Activated T-helper 1 cell treated with anti-CD3 and anti-CD28 coated beads, Interleukin-12 subunit alpha, Interleukin-12 subunit beta, Interleukin-2, Interleukin-4 antibody, amounts not matched to agents 30 ng/mL and 10 ng/mL and 1 ng/mL, durations not matched to agents 14 hours and 24 hours and 36 hours (primary cell): ENCODE measurements at regions of chr13 and their contacts with region 1.

Region 1: GRCh38 chr13:33542283-33543088 is 256.9 kb upstream of the STARD13 start:
- DNase-seq: peak; percentile 99
- H3K4me3 Mint-ChIP-seq: peak overlapping the region; percentile 90
- H3K27ac Mint-ChIP-seq: peak overlapping the region; percentile 100
- H3K4me1 Mint-ChIP-seq: peaks cover 53% of the 10 kb centered on the region
- H3K27me3 Mint-ChIP-seq: no peaks in the 10 kb centered on the region

Region 2: GRCh38 chr13:32315238-32316027 is 1227.1 kb before region 1 on chr13 and contains the starts of genes BRCA2 and ZAR1L:
- intact Hi-C with region 1: loop called (anchors 1 kb)
- DNase-seq: peak; percentile 86
- H3K4me3 Mint-ChIP-seq: peak within 1 kb of the TSS; percentile 96
- H3K27ac Mint-ChIP-seq: peak within 1 kb of the TSS; percentile 100
- H3K4me1 Mint-ChIP-seq: peaks cover 48% of the 10 kb centered on the region
- H3K27me3 Mint-ChIP-seq: no peaks in the 10 kb centered on the region
- total RNA-seq, gene BRCA2: 16.7 and 18.9 TPM in 2 replicates
- total RNA-seq, gene ZAR1L: not detected in 2 replicates

Region 3: DNA sequence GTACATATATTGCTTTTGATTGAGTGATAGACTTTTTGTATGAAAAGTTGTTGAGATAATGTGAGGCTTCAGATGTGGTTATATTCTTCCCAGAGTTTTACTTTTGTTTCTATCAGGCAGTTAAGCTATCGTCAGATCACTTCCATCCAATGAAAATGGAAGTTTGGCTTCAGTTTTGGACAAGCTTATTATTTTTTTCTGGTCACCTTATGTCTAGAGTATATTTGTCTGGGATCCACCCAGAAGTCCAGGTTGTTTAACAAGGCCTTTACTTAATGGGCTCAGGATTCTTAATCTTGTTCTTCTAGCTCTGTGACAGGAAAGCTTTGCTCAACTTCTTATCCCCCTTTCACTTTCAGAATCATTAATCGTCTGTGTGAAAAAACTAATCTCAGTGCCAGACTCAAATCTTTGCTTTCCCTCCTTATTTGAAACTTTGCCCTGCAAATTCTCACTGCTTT is 805.3 kb before region 1 on chr13:
- intact Hi-C with region 1: loop called (anchors 1 kb)
- DNase-seq: no peak
- H3K4me3 Mint-ChIP-seq: peak overlapping the region; percentile 74
- H3K27ac Mint-ChIP-seq: peak overlapping the region; percentile 80
- H3K4me1 Mint-ChIP-seq: peaks cover 38% of the 10 kb centered on the region
- H3K27me3 Mint-ChIP-seq: no peaks in the 10 kb centered on the region

Region 4: DNA sequence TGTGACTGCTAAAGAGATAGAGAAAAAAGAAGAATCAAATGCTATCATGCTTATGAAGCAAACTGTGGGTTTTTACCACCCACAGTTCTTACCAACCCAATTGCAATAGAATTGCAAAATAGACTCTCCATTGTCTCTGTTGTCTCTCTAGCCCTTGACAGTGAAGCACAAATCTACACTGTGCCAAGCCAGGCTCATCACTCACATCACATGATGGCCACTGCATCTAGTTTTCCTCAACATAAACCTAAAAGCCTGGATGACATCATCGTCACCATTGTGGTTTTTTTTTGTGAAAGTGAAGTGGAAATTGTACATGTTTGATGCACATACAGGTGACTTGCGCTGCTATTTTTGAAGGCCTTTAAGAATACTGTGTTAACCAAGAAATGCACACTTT is 470.2 kb before region 1 on chr13:
- intact Hi-C with region 1: loop called (anchors 5 kb)
- DNase-seq: peak; percentile 3
- H3K4me3 Mint-ChIP-seq: no peak overlapping the region
- H3K27ac Mint-ChIP-seq: peak overlapping the region; percentile 55
- H3K4me1 Mint-ChIP-seq: peaks cover 35% of the 10 kb centered on the region
- H3K27me3 Mint-ChIP-seq: no peaks in the 10 kb centered on the region

Region 5: DNA sequence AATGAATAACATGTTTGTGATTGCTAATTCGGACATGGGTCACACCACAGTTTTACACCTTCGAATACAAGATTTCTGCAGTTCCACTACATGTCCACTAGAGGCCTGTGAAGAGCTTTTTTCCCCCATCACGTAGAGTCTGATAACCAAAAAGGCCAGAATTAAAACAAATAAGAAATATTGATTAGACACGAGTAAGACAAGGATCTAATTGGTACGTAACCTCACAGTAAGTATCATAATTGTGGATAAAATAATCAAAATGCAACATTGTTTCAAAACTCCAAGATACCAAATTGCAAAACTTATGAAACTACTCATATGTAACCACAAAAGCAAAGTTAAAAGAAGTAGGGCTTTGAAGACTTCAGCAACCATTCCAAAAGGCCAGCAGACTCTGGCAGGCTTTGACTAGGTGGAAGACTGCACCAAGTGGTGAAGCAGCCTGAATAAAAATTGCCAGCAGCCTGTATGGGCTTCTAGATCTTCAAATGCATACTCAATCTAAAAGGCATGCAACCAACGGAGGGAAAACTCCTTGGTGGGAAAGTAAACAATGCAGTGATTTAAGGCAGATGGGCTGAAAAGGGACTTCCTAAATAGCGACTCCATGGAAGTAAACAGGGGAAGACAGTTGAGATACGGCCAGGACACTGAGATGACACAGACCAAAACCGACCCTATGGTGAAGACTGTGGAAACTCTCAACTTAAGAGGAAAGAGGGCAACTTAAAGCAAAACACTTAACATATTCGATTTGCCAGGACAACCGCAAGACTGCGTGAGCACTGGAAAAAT is 313.6 kb before region 1 on chr13:
- intact Hi-C with region 1: loop called (anchors 1 kb)
- DNase-seq: no peak
- H3K4me3 Mint-ChIP-seq: no peak overlapping the region
- H3K27ac Mint-ChIP-seq: no peak overlapping the region
- H3K4me1 Mint-ChIP-seq: peaks cover 11% of the 10 kb centered on the region
- H3K27me3 Mint-ChIP-seq: no peaks in the 10 kb centered on the region

Region 6: DNA sequence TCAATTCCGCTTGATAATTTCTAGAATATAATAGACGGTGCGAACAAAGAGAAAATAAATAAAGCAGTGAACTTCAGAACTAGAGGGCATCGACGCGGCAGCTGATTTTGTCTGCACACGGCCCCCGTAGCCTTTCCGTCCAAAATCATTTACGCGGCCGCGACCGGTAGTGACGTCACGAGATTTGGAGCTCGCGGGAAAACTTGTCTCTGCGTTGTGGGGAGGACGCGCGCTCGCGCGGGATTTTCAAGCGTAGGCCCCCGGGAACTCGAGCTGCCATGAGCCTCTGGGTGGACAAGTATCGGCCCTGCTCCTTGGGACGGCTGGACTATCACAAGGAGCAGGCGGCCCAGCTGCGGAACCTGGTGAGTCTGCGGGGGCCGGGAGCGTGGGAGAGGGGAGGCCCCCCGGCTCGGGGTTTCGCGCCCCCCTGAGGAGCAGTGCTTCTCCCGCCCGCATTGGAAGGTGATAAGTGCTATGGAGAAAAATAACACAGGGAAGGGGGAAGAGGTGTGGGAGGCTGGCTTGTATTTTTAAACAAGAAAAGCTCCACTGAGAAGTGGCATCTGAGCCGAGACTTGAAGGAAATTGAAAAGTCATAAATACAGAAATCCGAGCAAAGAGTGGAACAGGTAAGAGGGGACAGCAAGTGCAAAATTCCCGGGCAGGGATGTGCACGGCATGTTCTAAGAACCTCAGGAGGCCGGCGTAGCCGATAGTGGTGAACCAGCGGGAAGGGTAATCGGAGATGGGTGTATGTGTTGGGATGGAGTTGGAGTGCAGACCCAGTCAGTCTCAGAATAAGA is 275.6 kb after region 1 on chr13 and contains the start of gene RFC3:
- intact Hi-C with region 1: loop called (anchors 1 kb)
- DNase-seq: peak; percentile 90
- H3K4me3 Mint-ChIP-seq: peak within 1 kb of the TSS; percentile 97
- H3K27ac Mint-ChIP-seq: peak within 1 kb of the TSS; percentile 90
- H3K4me1 Mint-ChIP-seq: peaks cover 46% of the 10 kb centered on the region
- H3K27me3 Mint-ChIP-seq: peaks cover 8% of the 10 kb centered on the region
- total RNA-seq, gene RFC3: 74.7 and 78.0 TPM in 2 replicates